Mammary epithelial cell (primary cell): ENCODE measurements at regions of chr3 and their contacts with region 1.

Region 1: GRCh38 chr3:73502609-73503583 is 121.8 kb downstream of the PDZRN3 start:
- DNase-seq: peak; percentile 41
- H3K4me3 ChIP-seq: no peak overlapping the region
- H3K27ac ChIP-seq: no peak overlapping the region
- H3K4me1 ChIP-seq: no peaks in the 10 kb centered on the region
- H3K27me3 ChIP-seq: no peaks in the 10 kb centered on the region
- CTCF ChIP-seq: peak; percentile 78 to 92

Region 2: DNA sequence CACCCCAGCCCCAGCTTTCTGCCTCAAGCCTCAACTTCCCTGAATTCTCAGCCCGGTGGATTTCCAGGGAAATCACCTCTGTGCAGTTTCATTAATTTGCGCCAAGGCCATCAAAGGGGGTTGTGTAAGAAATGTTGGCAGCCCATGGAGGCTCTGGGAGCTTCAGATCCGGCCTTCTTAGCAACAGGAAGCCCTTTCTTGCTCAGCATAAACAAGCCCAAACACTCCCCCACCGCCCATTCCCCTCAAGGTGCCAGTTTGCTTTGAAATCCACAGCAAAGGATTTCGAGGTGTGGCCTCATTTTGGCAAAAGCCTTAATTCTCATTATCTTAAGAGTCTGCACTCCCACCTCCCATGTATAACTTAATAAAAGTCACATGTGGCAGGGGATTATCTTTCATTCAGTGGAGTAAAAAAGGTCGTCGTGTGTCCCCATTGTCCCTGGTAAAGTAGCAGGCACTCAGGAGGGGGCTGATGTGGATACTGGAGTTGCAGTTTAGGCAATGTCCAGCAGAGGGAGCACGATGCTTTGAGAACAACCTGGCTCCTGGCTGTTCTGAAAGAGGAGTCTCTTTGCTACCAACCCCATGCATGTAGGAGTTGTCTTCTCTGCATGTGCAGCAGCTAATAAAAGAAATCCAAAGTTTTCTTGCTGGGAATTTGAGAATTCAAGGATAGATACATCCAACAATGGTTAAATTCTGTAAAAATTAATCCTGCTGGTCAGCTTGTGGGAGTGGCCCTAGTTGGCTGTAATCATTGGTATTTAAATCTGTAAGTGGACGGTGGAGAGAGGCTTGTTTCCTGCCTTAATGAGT is 401.9 kb before region 1 on chr3:
- CTCF ChIA-PET with region 1: no interaction called
- dilution Hi-C with region 1: no loop called
- in situ Hi-C with region 1: loop called (anchors 5 kb)
- intact Hi-C with region 1: loop called (anchors 1 kb)
- DNase-seq: peak; percentile 61
- H3K4me3 ChIP-seq: no peak overlapping the region
- H3K27ac ChIP-seq: no peak overlapping the region
- H3K4me1 ChIP-seq: no peaks in the 10 kb centered on the region
- H3K27me3 ChIP-seq: no peaks in the 10 kb centered on the region
- CTCF ChIP-seq: peak; percentile 94 to 95

Region 3: DNA sequence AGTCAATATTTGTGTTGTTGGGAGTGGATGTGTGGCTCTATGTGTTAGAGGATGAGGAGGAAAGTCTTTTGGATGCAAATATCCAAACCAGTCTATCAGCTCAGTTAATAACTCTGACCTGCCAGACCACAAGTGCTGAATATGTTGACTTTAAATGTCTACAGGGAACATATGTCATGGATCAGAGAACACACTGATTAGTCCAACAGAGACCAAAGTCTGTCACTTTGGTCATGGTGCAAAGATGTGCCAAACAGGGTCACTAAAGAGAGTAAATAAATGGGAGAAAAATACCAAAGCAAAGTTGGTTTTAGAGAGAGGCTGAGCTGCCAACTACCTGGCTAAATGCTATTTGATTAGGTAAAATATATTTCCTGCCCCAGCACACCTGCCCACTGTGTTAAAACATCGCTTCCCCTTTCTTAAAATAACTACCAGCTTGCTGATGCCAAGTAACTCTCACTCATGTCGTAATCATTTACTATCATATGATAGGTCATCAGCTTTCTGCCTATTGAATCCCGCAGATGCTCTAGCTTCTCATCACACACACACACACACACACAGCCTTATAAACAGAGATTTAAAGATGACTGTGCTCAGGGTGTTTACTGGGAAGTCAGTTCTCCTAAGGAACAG is 51.5 kb before region 1 on chr3:
- CTCF ChIA-PET with region 1: interaction called, 3 read pairs
- dilution Hi-C with region 1: no loop called
- in situ Hi-C with region 1: no loop called
- intact Hi-C with region 1: loop called (anchors 1 kb)
- DNase-seq: no peak
- H3K4me3 ChIP-seq: no peak overlapping the region
- H3K27ac ChIP-seq: no peak overlapping the region
- H3K4me1 ChIP-seq: no peaks in the 10 kb centered on the region
- H3K27me3 ChIP-seq: no peaks in the 10 kb centered on the region
- CTCF ChIP-seq: no peak

Region 4: GRCh38 chr3:73614411-73614810 is 111.5 kb after region 1 on chr3:
- CTCF ChIA-PET with region 1: no interaction called
- dilution Hi-C with region 1: no loop called
- in situ Hi-C with region 1: no loop called
- intact Hi-C with region 1: no loop called
- DNase-seq: peak; percentile 68
- H3K4me3 ChIP-seq: no peak overlapping the region
- H3K27ac ChIP-seq: no peak overlapping the region
- H3K4me1 ChIP-seq: peaks cover 9% of the 10 kb centered on the region
- H3K27me3 ChIP-seq: no peaks in the 10 kb centered on the region
- CTCF ChIP-seq: peak in 1 of 2 donors; percentile 20

Region 5: GRCh38 chr3:73719861-73720260 is 217.0 kb after region 1 on chr3:
- CTCF ChIA-PET with region 1: no interaction called
- dilution Hi-C with region 1: no loop called
- in situ Hi-C with region 1: no loop called
- intact Hi-C with region 1: no loop called
- DNase-seq: no peak
- H3K4me3 ChIP-seq: no peak overlapping the region
- H3K27ac ChIP-seq: no peak overlapping the region
- H3K4me1 ChIP-seq: peaks cover 7% of the 10 kb centered on the region
- H3K27me3 ChIP-seq: no peaks in the 10 kb centered on the region
- CTCF ChIP-seq: no peak

Region 6: GRCh38 chr3:73855813-73856514 is 353.1 kb after region 1 on chr3:
- CTCF ChIA-PET with region 1: no interaction called
- dilution Hi-C with region 1: no loop called
- in situ Hi-C with region 1: loop called in 1 of 2 experiments (anchors 10 kb)
- intact Hi-C with region 1: no loop called
- DNase-seq: no peak
- H3K4me3 ChIP-seq: no peak overlapping the region
- H3K27ac ChIP-seq: no peak overlapping the region
- H3K4me1 ChIP-seq: no peaks in the 10 kb centered on the region
- H3K27me3 ChIP-seq: no peaks in the 10 kb centered on the region
- CTCF ChIP-seq: no peak